ENCODE measurements at regions of chr12 and their contacts with region 1.

Region 1: GRCh38 chr12:45648070-45648469 is 81.4 kb upstream of the ARID2 start:
- DNase-seq: no peak
- H3K4me3 Mint-ChIP-seq: no peak overlapping the region
- H3K27ac Mint-ChIP-seq: no peak overlapping the region
- H3K4me1 Mint-ChIP-seq: peaks cover 11% of the 10 kb centered on the region
- H3K27me3 Mint-ChIP-seq: peaks cover 8% of the 10 kb centered on the region

Region 2: DNA sequence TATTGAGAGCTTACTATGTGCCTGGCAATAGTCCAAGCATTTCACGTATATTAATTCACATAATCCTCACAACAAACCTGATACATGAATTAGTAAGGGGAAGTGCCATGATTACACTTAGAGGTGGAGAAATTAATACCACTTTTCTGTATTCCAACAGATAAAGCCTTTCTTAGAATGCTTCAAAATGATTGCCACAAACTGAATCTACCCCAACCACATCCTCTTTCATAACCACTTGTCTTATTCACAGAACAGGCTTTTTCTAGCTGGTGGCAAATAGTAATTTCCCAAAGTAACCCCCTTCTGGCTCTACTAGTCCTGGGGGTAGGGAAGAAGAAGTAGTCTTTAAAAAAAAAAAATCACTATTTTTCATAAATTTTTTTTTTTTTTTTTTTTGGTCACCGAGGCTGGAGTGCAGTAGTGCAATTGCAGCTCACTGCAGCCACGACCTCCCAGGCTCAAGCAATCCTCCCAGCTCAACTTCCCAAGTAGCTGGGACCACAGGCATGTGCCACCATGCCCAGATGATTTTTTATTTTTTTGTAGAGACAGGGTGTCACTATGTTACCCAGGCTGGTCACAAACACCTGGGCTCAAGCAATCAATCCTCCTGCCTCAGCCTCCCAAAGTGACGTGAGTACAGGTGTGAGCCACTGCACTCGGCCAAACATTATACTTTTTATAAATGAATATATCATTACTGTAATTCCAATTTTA is 22.4 kb after region 1 on chr12:
- CTCF ChIA-PET with region 1: no interaction called
- intact Hi-C with region 1: loop called (anchors 2 kb)
- DNase-seq: no peak
- H3K4me3 Mint-ChIP-seq: no peak overlapping the region
- H3K27ac Mint-ChIP-seq: no peak overlapping the region
- H3K4me1 Mint-ChIP-seq: peaks cover 30% of the 10 kb centered on the region
- H3K27me3 Mint-ChIP-seq: peaks cover 7% of the 10 kb centered on the region

Measured in activated naive CD4-positive, alpha-beta T cell treated with anti-CD3 and anti-CD28 coated beads for 36 hours (primary cell).